ENCODE measurements at regions of chr7 and their contacts with region 1.

Region 1: GRCh38 chr7:105013221-105013815 is 687 bp upstream of the KMT2E start:
- DNase-seq: peak; percentile 89 to 97 (median 94)
- ATAC-seq: peak; percentile 59 to 72 (median 70)
- H3K4me3 ChIP-seq: peak overlapping the region; percentile 79 to 88
- H3K4me3 Mint-ChIP-seq: peak overlapping the region; percentile 97 to 100 (median 100)
- H3K27ac ChIP-seq: peak overlapping the region; percentile 98
- H3K27ac Mint-ChIP-seq: peak overlapping the region; percentile 100
- H3K4me1 ChIP-seq: peaks cover 14 to 32% of the 10 kb centered on the region in 2 experiments
- H3K4me1 Mint-ChIP-seq: peaks cover 41 to 55% (median 44%) of the 10 kb centered on the region in 3 donors
- H3K27me3 ChIP-seq: no peaks in the 10 kb centered on the region
- H3K27me3 Mint-ChIP-seq: no peaks in the 10 kb centered on the region

Region 2: GRCh38 chr7:104862719-104863118 is 150.6 kb before region 1 on chr7:
- CTCF ChIA-PET with region 1: no interaction called
- POLR2A ChIA-PET with region 1: no interaction called
- DNase-seq: no peak
- ATAC-seq: no peak
- H3K4me3 ChIP-seq: no peak overlapping the region
- H3K4me3 Mint-ChIP-seq: no peak overlapping the region
- H3K27ac ChIP-seq: no peak overlapping the region
- H3K27ac Mint-ChIP-seq: no peak overlapping the region
- H3K4me1 ChIP-seq: peaks cover 9 to 11% of the 10 kb centered on the region in 2 experiments
- H3K4me1 Mint-ChIP-seq: peaks cover 10 to 12% (median 10%) of the 10 kb centered on the region in 3 donors
- H3K27me3 ChIP-seq: peaks cover 0 to 12% of the 10 kb centered on the region in 2 experiments
- H3K27me3 Mint-ChIP-seq: peaks cover 13 to 18% of the 10 kb centered on the region in 2 donors

Region 3: GRCh38 chr7:104943502-104944343 is 69.6 kb before region 1 on chr7:
- CTCF ChIA-PET with region 1: interaction called in 1 of 2 experiments, 3 read pairs
- POLR2A ChIA-PET with region 1: interaction called, 9 to 11 read pairs
- DNase-seq: peak; percentile 25 to 80 (median 58)
- ATAC-seq: peak; percentile 19 to 47 (median 43)
- H3K4me3 ChIP-seq: peak overlapping the region; percentile 8 to 24
- H3K4me3 Mint-ChIP-seq: peak overlapping the region; percentile 81 to 96 (median 85)
- H3K27ac ChIP-seq: peak overlapping the region; percentile 99
- H3K27ac Mint-ChIP-seq: peak overlapping the region; percentile 99 to 100
- H3K4me1 ChIP-seq: peaks cover 30 to 65% of the 10 kb centered on the region in 2 experiments
- H3K4me1 Mint-ChIP-seq: peaks cover 66 to 74% (median 67%) of the 10 kb centered on the region in 3 donors
- H3K27me3 ChIP-seq: no peaks in the 10 kb centered on the region
- H3K27me3 Mint-ChIP-seq: no peaks in the 10 kb centered on the region

Region 4: GRCh38 chr7:105024743-105025142 is 11.4 kb after region 1 on chr7:
- CTCF ChIA-PET with region 1: interaction called, 4 to 11 read pairs
- POLR2A ChIA-PET with region 1: interaction called, 22 to 34 read pairs
- DNase-seq: no peak
- ATAC-seq: no peak
- H3K4me3 ChIP-seq: no peak overlapping the region
- H3K4me3 Mint-ChIP-seq: peak overlapping the region; percentile 21 to 38 (median 28)
- H3K27ac ChIP-seq: no peak overlapping the region
- H3K27ac Mint-ChIP-seq: no peak overlapping the region
- H3K4me1 ChIP-seq: peaks cover 34 to 41% of the 10 kb centered on the region in 2 experiments
- H3K4me1 Mint-ChIP-seq: peaks cover 85 to 92% (median 92%) of the 10 kb centered on the region in 3 donors
- H3K27me3 ChIP-seq: no peaks in the 10 kb centered on the region
- H3K27me3 Mint-ChIP-seq: no peaks in the 10 kb centered on the region

Region 5: DNA sequence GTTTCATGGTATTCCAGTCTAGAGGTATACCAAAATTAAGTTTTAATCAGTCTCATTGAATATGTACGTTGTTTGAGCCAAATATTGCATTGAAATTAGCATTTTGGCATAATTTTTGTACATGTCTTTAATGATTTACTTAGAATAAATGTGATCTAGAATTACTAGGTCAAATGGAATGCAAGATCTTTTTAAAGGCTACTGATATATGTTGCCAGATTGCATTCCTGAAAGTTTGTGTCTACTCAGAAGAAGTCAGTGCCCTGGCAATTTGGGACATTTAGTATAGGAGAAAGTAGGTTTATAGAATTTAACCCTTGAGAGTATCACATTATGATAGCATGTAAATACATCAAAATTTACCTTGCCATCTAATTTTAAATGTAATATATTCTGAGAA is 33.1 kb after region 1 on chr7:
- CTCF ChIA-PET with region 1: interaction called in 1 of 2 experiments, 14 read pairs
- POLR2A ChIA-PET with region 1: interaction called, 4 to 5 read pairs
- DNase-seq: no peak
- ATAC-seq: no peak
- H3K4me3 ChIP-seq: no peak overlapping the region
- H3K4me3 Mint-ChIP-seq: no peak overlapping the region
- H3K27ac ChIP-seq: no peak overlapping the region
- H3K27ac Mint-ChIP-seq: peak overlapping the region; percentile 0 to 42
- H3K4me1 ChIP-seq: peaks cover 7 to 18% of the 10 kb centered on the region in 2 experiments
- H3K4me1 Mint-ChIP-seq: peaks cover 55 to 68% (median 59%) of the 10 kb centered on the region in 3 donors
- H3K27me3 ChIP-seq: no peaks in the 10 kb centered on the region
- H3K27me3 Mint-ChIP-seq: no peaks in the 10 kb centered on the region

Measured in T-cell (primary cell).